ENCODE measurements at regions of chr4 and their contacts with region 1.

Region 1: DNA sequence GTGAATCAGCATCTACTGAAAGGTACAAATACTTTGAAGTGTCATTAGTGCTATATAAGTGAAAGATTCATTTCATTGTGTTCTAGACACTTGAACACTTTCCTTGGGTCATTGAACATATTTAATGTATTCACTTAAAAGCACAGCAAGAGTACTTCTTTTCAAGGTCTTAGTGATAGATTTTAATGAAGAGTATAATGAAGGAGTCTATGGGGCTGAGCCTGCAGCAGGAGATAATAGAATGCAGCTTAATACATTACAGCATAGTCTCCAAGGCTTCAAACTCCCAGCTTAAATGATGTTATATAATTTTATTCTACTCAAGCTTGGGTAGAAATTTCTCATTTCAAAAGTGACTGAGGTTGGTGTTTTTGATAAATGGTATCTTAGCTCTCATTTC is 66.1 kb upstream of the VEGFC start:
- DNase-seq: no peak
- H3K4me3 ChIP-seq: no peak overlapping the region
- CTCF ChIP-seq: no peak
- POLR2A ChIP-seq: no peak

Region 2: GRCh38 chr4:176902710-176903323 is 44.0 kb after region 1 on chr4:
- intact Hi-C with region 1: loop called (anchors 2 kb)
- DNase-seq: no peak
- H3K4me3 ChIP-seq: no peak overlapping the region
- CTCF ChIP-seq: no peak
- POLR2A ChIP-seq: no peak

Measured in lower leg skin (tissue), 4 donors.